ENCODE measurements at regions of chr6 and their contacts with region 1.

Region 1: DNA sequence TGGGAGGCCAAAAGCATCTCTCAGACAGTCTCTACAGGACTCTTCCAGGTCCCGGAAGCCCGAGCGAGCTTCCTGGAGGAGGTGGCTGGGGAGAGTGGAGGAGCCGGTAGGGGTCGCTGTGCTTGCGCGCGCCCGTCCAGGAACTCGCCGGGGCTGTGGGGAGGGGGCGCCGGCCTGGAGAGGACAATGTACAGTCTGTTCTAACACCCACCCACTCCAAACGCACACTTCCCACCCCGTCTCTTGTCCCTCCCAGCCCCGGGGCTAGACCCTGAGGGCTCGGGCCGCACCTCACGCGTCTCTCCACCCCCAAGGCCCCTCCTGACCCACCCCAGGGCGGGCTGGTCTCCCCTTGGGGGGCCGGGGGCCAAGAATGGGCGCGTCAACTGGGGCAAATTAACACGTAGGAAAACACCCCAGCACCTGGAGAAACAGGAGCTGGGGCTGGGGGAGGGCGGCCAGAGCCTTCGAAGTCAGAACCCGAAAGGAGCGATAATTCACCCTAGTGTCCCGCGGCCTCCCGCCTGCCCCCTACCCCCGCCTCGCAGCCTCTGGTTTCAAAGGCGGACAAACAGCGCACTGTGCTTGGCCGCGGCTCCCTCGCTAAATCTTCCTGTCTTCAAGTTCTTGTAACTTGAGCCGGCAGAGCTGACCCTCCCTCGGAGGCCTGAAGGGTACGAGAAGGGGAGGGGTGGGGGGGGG is 103.2 kb upstream of the FOXP4 start:
- DNase-seq: peak; percentile 86
- ATAC-seq: peak; percentile 83
- H3K4me3 Mint-ChIP-seq: peak overlapping the region; percentile 60
- H3K27ac Mint-ChIP-seq: 0 out of 2 replicates have a peak overlapping the region, but pooled peaks have one; percentile 66
- H3K4me1 Mint-ChIP-seq: peaks cover 49% of the 10 kb centered on the region
- H3K27me3 Mint-ChIP-seq: peaks cover 54% of the 10 kb centered on the region
- CTCF ChIP-seq: peak; percentile 96

Region 2: GRCh38 chr6:41413250-41413649 is 29.7 kb before region 1 on chr6:
- CTCF ChIA-PET with region 1: interaction called, 18 read pairs
- POLR2A ChIA-PET with region 1: no interaction called
- DNase-seq: no peak
- ATAC-seq: no peak
- H3K4me3 Mint-ChIP-seq: no peak overlapping the region
- H3K27ac Mint-ChIP-seq: no peak overlapping the region
- H3K4me1 Mint-ChIP-seq: peaks cover 32% of the 10 kb centered on the region
- H3K27me3 Mint-ChIP-seq: peaks cover 100% of the 10 kb centered on the region
- CTCF ChIP-seq: no peak

Region 3: GRCh38 chr6:41470331-41471063 is 27.5 kb after region 1 on chr6:
- CTCF ChIA-PET with region 1: interaction called, 40 read pairs
- POLR2A ChIA-PET with region 1: no interaction called
- DNase-seq: peak; percentile 54
- ATAC-seq: peak; percentile 31
- H3K4me3 Mint-ChIP-seq: peak overlapping the region; percentile 70
- H3K27ac Mint-ChIP-seq: no peak overlapping the region
- H3K4me1 Mint-ChIP-seq: peaks cover 47% of the 10 kb centered on the region
- H3K27me3 Mint-ChIP-seq: peaks cover 92% of the 10 kb centered on the region
- CTCF ChIP-seq: no peak

Region 4: DNA sequence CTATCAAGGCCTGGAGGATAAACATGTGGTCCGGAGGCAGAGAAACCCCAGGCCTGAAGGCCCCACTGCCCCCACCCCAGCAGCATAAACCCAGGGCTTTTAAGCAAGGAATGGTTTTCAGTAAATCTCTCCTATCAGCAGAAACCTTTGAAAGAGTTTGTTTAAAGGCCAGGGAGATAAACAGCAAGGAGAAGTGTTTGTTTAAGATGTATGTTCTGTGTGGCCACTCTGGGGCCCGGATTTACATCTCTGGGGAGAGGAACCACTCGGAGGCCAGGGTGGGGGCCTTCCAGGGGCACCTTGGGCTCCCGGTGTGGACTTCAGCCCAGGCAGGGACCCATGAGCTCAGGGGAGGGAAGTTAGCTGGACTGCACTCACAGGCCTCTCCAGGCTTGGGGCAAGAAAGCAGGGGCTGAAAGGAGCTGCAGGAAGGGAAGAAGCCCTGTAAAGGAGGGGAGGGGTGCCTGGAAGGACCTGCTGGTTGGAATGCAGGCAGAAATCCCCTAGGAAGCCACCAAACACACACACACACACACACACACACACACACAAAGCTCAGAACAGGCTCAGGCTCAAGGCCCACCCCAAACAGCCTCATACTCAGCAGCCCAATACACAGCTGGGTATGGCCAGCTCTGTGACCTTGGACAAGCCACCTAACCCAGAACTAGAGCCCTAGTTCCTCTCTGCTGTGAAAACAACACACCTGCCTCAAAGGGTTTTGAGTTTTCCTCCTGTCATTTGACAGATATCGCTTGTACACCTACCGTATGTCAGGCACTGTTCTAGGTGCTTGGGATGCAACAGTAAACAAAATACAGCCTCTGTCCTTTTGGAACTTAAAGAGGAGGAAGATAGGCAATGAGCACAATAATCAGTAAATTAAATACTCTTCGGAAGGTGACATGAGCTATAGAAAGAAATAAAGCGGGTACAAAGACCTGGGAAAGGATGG is 77.1 kb after region 1 on chr6:
- CTCF ChIA-PET with region 1: interaction called, 11 read pairs
- POLR2A ChIA-PET with region 1: interaction called, 3 read pairs
- DNase-seq: no peak
- ATAC-seq: peak; percentile 13
- H3K4me3 Mint-ChIP-seq: no peak overlapping the region
- H3K27ac Mint-ChIP-seq: no peak overlapping the region
- H3K4me1 Mint-ChIP-seq: peaks cover 37% of the 10 kb centered on the region
- H3K27me3 Mint-ChIP-seq: peaks cover 22% of the 10 kb centered on the region
- CTCF ChIP-seq: no peak

Region 5: GRCh38 chr6:41578217-41579087 is 135.5 kb after region 1 on chr6:
- CTCF ChIA-PET with region 1: interaction called, 17 read pairs
- POLR2A ChIA-PET with region 1: no interaction called
- DNase-seq: peak; percentile 81
- ATAC-seq: peak; percentile 71
- H3K4me3 Mint-ChIP-seq: peak overlapping the region; percentile 57
- H3K27ac Mint-ChIP-seq: peak overlapping the region; percentile 99
- H3K4me1 Mint-ChIP-seq: peaks cover 83% of the 10 kb centered on the region
- H3K27me3 Mint-ChIP-seq: no peaks in the 10 kb centered on the region; the same call in 1 of the 2 replicates
- CTCF ChIP-seq: no peak

Measured in WTC11 (cell line).